CD8-positive, alpha-beta T cell (primary cell): ENCODE measurements at regions of chr9 and their contacts with region 1.

Region 1: GRCh38 chr9:89522261-89522958 is 24.5 kb upstream of the SEMA4D start:
- DNase-seq: peak; percentile 46 to 95 (median 77)
- ATAC-seq: peak; percentile 85
- H3K4me3 ChIP-seq: peak overlapping the region in 1 of 2 experiments; percentile 4
- H3K4me3 Mint-ChIP-seq: peak overlapping the region; percentile 48
- H3K27ac ChIP-seq: peak overlapping the region; percentile 60 to 71
- H3K27ac Mint-ChIP-seq: peak overlapping the region; percentile 95
- H3K4me1 ChIP-seq: peaks cover 96% of the 10 kb centered on the region
- H3K4me1 Mint-ChIP-seq: peaks cover 100% of the 10 kb centered on the region
- H3K27me3 ChIP-seq: no peaks in the 10 kb centered on the region
- H3K27me3 Mint-ChIP-seq: no peaks in the 10 kb centered on the region
- CTCF ChIP-seq: no peak

Region 2: GRCh38 chr9:89483592-89484522 is 38.6 kb before region 1 on chr9:
- CTCF ChIA-PET with region 1: interaction called, 6 read pairs
- POLR2A ChIA-PET with region 1: interaction called, 16 read pairs
- intact Hi-C with region 1: loop called in 1 of 2 experiments (anchors 5 kb)
- DNase-seq: peak; percentile 44 to 88 (median 81)
- ATAC-seq: peak; percentile 76
- H3K4me3 ChIP-seq: peak overlapping the region; percentile 52
- H3K4me3 Mint-ChIP-seq: peak overlapping the region; percentile 86
- H3K27ac ChIP-seq: peak overlapping the region; percentile 20 to 66
- H3K27ac Mint-ChIP-seq: peak overlapping the region; percentile 96
- H3K4me1 ChIP-seq: peaks cover 77% of the 10 kb centered on the region
- H3K4me1 Mint-ChIP-seq: peaks cover 86% of the 10 kb centered on the region
- H3K27me3 ChIP-seq: no peaks in the 10 kb centered on the region
- H3K27me3 Mint-ChIP-seq: no peaks in the 10 kb centered on the region
- CTCF ChIP-seq: no peak

Region 3: DNA sequence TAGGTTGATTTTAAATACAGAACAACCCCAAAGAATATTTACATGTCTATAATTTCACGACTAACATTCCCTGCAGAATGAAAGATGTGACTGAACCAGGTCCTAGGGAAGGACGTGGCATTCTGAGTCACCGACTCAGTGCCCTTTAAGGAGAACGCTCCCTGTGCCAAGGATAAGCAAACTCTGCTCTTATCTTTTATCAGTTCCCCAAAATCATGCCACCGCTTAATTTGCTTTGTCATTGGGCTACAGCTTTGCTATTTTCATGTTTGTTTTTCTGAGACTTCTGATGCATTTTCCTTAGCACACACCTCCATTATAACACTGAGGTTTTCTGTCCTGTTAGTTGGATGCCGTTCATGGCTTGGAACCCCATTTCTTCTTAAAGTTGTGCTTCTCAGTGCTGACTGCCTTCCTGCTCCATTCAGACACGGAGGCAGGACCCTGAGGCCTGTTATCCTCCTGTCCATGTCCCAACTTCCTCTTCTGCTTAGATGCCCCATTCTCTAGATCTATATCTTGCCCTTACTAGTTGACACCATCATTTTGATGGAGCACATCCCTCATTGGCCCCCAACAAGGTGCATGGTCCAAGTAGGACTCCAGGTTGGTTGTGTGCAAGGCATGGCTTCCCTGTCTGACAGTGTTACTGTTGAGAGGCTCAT is 13.3 kb before region 1 on chr9:
- CTCF ChIA-PET with region 1: interaction called, 8 read pairs
- POLR2A ChIA-PET with region 1: interaction called, 19 read pairs
- intact Hi-C with region 1: no loop called
- DNase-seq: no peak
- ATAC-seq: no peak
- H3K4me3 ChIP-seq: no peak overlapping the region
- H3K4me3 Mint-ChIP-seq: no peak overlapping the region
- H3K27ac ChIP-seq: no peak overlapping the region
- H3K27ac Mint-ChIP-seq: peak overlapping the region; percentile 79
- H3K4me1 ChIP-seq: peaks cover 64% of the 10 kb centered on the region
- H3K4me1 Mint-ChIP-seq: peaks cover 84% of the 10 kb centered on the region
- H3K27me3 ChIP-seq: no peaks in the 10 kb centered on the region
- H3K27me3 Mint-ChIP-seq: no peaks in the 10 kb centered on the region
- CTCF ChIP-seq: no peak

Region 4: DNA sequence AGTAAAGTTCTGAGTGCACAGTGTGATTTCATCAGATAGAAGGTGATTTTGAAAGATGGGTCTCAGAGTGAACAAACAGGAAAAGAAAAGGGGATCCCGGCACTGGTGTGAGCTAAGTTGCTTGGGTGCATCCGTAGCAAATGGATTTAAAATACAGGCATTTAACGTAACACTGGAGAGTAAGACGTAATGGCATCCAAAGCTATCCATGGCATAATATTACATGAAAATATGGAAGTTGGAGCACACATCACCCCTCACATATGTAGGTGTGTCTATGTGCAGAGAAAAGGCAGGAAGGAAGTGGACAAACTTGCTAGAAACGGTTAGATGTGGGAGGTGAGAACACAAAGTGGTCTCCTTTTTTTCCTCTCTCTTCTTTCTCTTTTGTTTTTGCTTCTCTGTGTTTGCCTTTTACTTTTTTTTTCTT is 13.8 kb after region 1 on chr9:
- CTCF ChIA-PET with region 1: interaction called, 10 read pairs
- POLR2A ChIA-PET with region 1: interaction called, 38 read pairs
- intact Hi-C with region 1: loop called (anchors 1 kb)
- DNase-seq: peak in 2 of 9 experiments; percentile 73 to 88
- ATAC-seq: peak; percentile 83
- H3K4me3 ChIP-seq: peak overlapping the region; percentile 9 to 13
- H3K4me3 Mint-ChIP-seq: peak overlapping the region; percentile 73
- H3K27ac ChIP-seq: peak overlapping the region; percentile 29 to 79
- H3K27ac Mint-ChIP-seq: peak overlapping the region; percentile 94
- H3K4me1 ChIP-seq: peaks cover 96% of the 10 kb centered on the region
- H3K4me1 Mint-ChIP-seq: peaks cover 94% of the 10 kb centered on the region
- H3K27me3 ChIP-seq: no peaks in the 10 kb centered on the region
- H3K27me3 Mint-ChIP-seq: no peaks in the 10 kb centered on the region
- CTCF ChIP-seq: no peak